CD8-positive, alpha-beta T cell (primary cell): ENCODE measurements at regions of chr7 and their contacts with region 1.

Region 1: DNA sequence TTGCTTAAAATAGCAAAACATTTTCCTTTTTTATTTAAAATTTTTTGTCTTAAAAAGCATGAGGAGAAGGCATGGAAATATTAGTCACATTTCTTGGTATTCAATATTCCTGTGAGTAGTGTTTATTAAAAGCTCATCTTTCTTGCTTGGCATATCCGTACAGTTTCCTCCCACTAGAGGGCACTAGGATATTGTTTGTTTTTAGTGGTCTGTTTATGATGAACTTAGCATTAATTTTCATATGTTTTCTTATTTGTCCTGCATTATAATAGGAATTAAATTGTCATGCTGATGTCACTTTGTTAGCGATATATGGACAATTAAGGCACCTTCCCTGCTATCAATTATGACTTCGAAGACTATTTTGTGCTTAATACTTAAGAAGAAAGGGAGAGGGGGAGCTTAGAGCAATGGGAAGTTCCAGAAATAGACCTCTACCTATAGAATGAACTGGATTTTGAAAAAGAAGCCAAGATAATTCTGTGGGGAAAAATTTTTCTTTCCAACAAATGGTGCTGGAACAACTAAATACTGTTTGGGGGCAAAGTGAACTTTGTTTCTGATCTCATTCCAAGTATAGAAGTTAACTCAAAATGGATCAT is 91.0 kb upstream of the STRIP2 start:
- DNase-seq: peak in 3 of 9 experiments; percentile 7 to 64 (median 53)
- ATAC-seq: no peak
- H3K4me3 ChIP-seq: no peak overlapping the region
- H3K4me3 Mint-ChIP-seq: no peak overlapping the region
- H3K27ac ChIP-seq: no peak overlapping the region
- H3K27ac Mint-ChIP-seq: no peak overlapping the region
- H3K4me1 ChIP-seq: no peaks in the 10 kb centered on the region
- H3K4me1 Mint-ChIP-seq: peaks cover 12% of the 10 kb centered on the region
- H3K27me3 ChIP-seq: no peaks in the 10 kb centered on the region
- H3K27me3 Mint-ChIP-seq: no peaks in the 10 kb centered on the region
- CTCF ChIP-seq: peak; percentile 80

Region 2: GRCh38 chr7:129122751-129123509 is 220.3 kb before region 1 on chr7:
- CTCF ChIA-PET with region 1: no interaction called
- POLR2A ChIA-PET with region 1: no interaction called
- intact Hi-C with region 1: no loop called
- DNase-seq: peak in 1 of 9 experiments; percentile 37
- ATAC-seq: no peak
- H3K4me3 ChIP-seq: no peak overlapping the region
- H3K4me3 Mint-ChIP-seq: no peak overlapping the region
- H3K27ac ChIP-seq: no peak overlapping the region
- H3K27ac Mint-ChIP-seq: no peak overlapping the region
- H3K4me1 ChIP-seq: no peaks in the 10 kb centered on the region
- H3K4me1 Mint-ChIP-seq: peaks cover 9% of the 10 kb centered on the region
- H3K27me3 ChIP-seq: no peaks in the 10 kb centered on the region
- H3K27me3 Mint-ChIP-seq: no peaks in the 10 kb centered on the region
- CTCF ChIP-seq: no peak

Region 3: DNA sequence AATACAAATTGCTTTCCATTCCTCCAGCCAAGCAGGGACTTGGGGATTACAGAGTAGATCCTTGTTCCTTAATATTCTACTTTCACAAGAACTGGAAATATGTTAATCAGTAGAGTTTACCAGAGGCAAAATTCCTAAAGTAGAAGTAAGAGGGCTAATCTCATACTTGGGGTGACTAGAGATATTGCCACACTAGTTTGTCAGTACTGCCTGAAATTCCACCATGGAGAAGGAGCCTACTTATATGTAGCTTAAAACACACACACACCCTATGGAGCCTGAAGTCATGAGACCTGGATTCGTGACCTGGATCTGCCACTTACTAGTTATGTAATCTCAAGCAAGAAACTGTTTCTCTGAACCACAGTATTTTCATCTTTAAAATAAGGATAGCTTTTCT is 124.9 kb after region 1 on chr7:
- CTCF ChIA-PET with region 1: interaction called, 18 read pairs
- POLR2A ChIA-PET with region 1: no interaction called
- intact Hi-C with region 1: loop called (anchors 1 kb)
- DNase-seq: no peak
- ATAC-seq: no peak
- H3K4me3 ChIP-seq: no peak overlapping the region
- H3K4me3 Mint-ChIP-seq: no peak overlapping the region
- H3K27ac ChIP-seq: no peak overlapping the region
- H3K27ac Mint-ChIP-seq: no peak overlapping the region
- H3K4me1 ChIP-seq: no peaks in the 10 kb centered on the region
- H3K4me1 Mint-ChIP-seq: peaks cover 2% of the 10 kb centered on the region
- H3K27me3 ChIP-seq: no peaks in the 10 kb centered on the region
- H3K27me3 Mint-ChIP-seq: no peaks in the 10 kb centered on the region
- CTCF ChIP-seq: no peak